Naive thymus-derived CD4-positive, alpha-beta T cell (primary cell): ENCODE measurements at regions of chr17 and their contacts with region 1.

Region 1: GRCh38 chr17:17041571-17042380 is 481 bp upstream of the MPRIP start:
- DNase-seq: peak; percentile 88 to 96 (median 95)
- ATAC-seq: peak; percentile 99
- H3K4me3 ChIP-seq: peak overlapping the region; percentile 73
- H3K4me3 Mint-ChIP-seq: peak overlapping the region; percentile 66 to 94 (median 76)
- H3K27ac ChIP-seq: peak overlapping the region; percentile 61
- H3K27ac Mint-ChIP-seq: peak overlapping the region in 2 of 9 donors; percentile 50 to 71
- H3K4me1 ChIP-seq: peaks cover 35% of the 10 kb centered on the region in 2 donors
- H3K4me1 Mint-ChIP-seq: peaks cover 37 to 47% (median 43%) of the 10 kb centered on the region in 7 donors
- H3K27me3 ChIP-seq: no peaks in the 10 kb centered on the region
- H3K27me3 Mint-ChIP-seq: peaks cover 0 to 4% (median 0%) of the 10 kb centered on the region in 5 donors

Region 2: DNA sequence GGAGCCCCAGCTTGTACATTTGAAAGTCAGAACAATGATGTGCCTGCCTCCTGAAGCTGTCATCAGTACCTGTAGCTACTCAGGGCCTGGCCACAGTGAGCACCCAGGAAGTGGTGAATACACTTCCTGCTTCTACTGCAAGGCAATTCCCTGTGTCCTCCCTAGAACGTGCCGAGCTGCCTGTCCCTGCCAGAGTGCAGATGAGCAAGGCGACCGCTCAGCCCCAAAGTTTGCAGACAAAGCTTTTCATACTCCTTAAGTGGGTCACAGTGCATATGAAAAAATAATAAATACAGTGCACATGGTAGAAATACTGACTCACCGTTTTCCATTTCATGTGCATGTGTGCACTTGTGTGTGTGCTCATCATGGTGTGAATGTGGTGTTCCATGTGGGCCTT is 77.8 kb after region 1 on chr17:
- CTCF ChIA-PET with region 1: no interaction called
- POLR2A ChIA-PET with region 1: no interaction called
- intact Hi-C with region 1: loop called in 1 of 2 experiments (anchors 10 kb)
- DNase-seq: peak in 8 of 9 donors; percentile 37 to 62 (median 53)
- ATAC-seq: peak; percentile 88
- H3K4me3 ChIP-seq: no peak overlapping the region
- H3K4me3 Mint-ChIP-seq: peak overlapping the region; percentile 49 to 72 (median 62)
- H3K27ac ChIP-seq: peak overlapping the region; percentile 44
- H3K27ac Mint-ChIP-seq: peak overlapping the region; percentile 81 to 92 (median 87)
- H3K4me1 ChIP-seq: peaks cover 43 to 52% of the 10 kb centered on the region in 2 donors
- H3K4me1 Mint-ChIP-seq: peaks cover 45 to 91% (median 89%) of the 10 kb centered on the region in 7 donors
- H3K27me3 ChIP-seq: no peaks in the 10 kb centered on the region
- H3K27me3 Mint-ChIP-seq: no peaks in the 10 kb centered on the region

Region 3: GRCh38 chr17:17206124-17206912 is 164.5 kb after region 1 on chr17 and contains the start of gene PLD6:
- CTCF ChIA-PET with region 1: no interaction called
- POLR2A ChIA-PET with region 1: no interaction called
- intact Hi-C with region 1: loop called in 1 of 2 experiments (anchors 1 kb)
- DNase-seq: peak; percentile 88 to 96 (median 93)
- ATAC-seq: peak; percentile 92
- H3K4me3 ChIP-seq: peak within 1 kb of the TSS; percentile 68
- H3K4me3 Mint-ChIP-seq: peak within 1 kb of the TSS; percentile 87 to 93 (median 89)
- H3K27ac ChIP-seq: peak within 1 kb of the TSS; percentile 70
- H3K27ac Mint-ChIP-seq: peak within 1 kb of the TSS; percentile 75 to 96 (median 91)
- H3K4me1 ChIP-seq: peaks cover 17 to 30% of the 10 kb centered on the region in 2 donors
- H3K4me1 Mint-ChIP-seq: peaks cover 12 to 32% (median 19%) of the 10 kb centered on the region in 7 donors
- H3K27me3 ChIP-seq: no peaks in the 10 kb centered on the region
- H3K27me3 Mint-ChIP-seq: no peaks in the 10 kb centered on the region
- total RNA-seq, gene PLD6: 6.2 to 13.9 (median 12.1) TPM

Region 4: DNA sequence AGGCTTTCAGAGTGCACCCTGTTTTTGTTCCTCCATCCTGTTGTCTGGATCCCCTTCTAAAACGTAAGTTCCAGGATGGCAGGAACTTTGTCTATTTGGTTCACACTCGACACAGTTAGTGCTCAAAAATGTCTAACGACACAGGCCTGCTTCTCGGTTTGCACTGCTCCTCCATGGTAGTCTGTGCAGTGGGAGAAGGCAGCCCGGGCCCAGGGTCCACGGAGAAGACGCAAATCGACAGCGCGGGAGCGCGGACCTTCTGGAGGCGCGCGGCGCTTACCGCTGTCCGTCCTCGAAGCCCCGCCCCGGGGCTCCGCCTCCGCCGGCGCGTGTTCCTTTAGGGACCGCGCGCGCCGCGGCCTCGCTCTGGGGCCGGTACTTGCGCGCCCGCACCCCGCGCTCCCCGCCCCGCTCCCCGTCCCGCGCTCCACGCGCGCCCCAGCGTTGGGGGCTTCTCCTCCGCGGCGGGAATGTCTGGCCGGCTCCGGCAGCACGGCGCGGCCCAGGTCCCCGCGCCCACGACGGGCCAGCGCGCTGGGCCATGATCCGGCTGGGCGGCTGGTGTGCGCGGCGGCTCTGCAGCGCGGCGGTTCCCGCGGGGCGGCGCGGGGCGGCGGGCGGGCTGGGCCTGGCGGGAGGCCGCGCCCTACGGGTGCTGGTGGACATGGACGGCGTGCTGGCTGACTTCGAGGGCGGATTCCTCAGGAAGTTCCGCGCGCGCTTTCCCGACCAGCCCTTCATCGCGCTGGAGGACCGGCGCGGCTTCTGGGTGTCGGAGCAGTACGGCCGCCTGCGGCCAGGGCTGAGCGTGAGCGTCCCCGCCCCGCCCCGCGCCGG is 261.5 kb after region 1 on chr17 and contains the start of gene NT5M:
- CTCF ChIA-PET with region 1: no interaction called
- POLR2A ChIA-PET with region 1: no interaction called
- intact Hi-C with region 1: loop called (anchors 2 kb)
- DNase-seq: peak; percentile 33 to 84 (median 56)
- ATAC-seq: peak; percentile 77
- H3K4me3 ChIP-seq: peak within 1 kb of the TSS; percentile 58
- H3K4me3 Mint-ChIP-seq: peak within 1 kb of the TSS; percentile 82 to 96 (median 90)
- H3K27ac ChIP-seq: peak within 1 kb of the TSS; percentile 67
- H3K27ac Mint-ChIP-seq: peak within 1 kb of the TSS; percentile 53 to 93 (median 84)
- H3K4me1 ChIP-seq: peaks cover 12 to 33% of the 10 kb centered on the region in 2 donors
- H3K4me1 Mint-ChIP-seq: peaks cover 16 to 49% (median 37%) of the 10 kb centered on the region in 7 donors
- H3K27me3 ChIP-seq: no peaks in the 10 kb centered on the region
- H3K27me3 Mint-ChIP-seq: no peaks in the 10 kb centered on the region
- total RNA-seq, gene NT5M: 2.9 to 6.3 (median 3.5) TPM

Region 5: GRCh38 chr17:17496189-17497064 is 454.7 kb after region 1 on chr17 and contains the start of gene RASD1:
- CTCF ChIA-PET with region 1: no interaction called
- POLR2A ChIA-PET with region 1: no interaction called
- intact Hi-C with region 1: loop called in 1 of 2 experiments (anchors 1 kb)
- DNase-seq: peak; percentile 61 to 89 (median 74)
- ATAC-seq: peak; percentile 90
- H3K4me3 ChIP-seq: peak within 1 kb of the TSS; percentile 61
- H3K4me3 Mint-ChIP-seq: peak within 1 kb of the TSS; percentile 77 to 91 (median 86)
- H3K27ac ChIP-seq: peak within 1 kb of the TSS; percentile 44
- H3K27ac Mint-ChIP-seq: peak within 1 kb of the TSS in 5 of 9 donors; percentile 29 to 86 (median 42)
- H3K4me1 ChIP-seq: peaks cover 3 to 11% of the 10 kb centered on the region in 2 donors
- H3K4me1 Mint-ChIP-seq: peaks cover 12 to 20% (median 14%) of the 10 kb centered on the region in 7 donors
- H3K27me3 ChIP-seq: no peaks in the 10 kb centered on the region
- H3K27me3 Mint-ChIP-seq: peaks cover 5 to 24% (median 6%) of the 10 kb centered on the region in 5 donors
- total RNA-seq, gene RASD1: 0.35 to 2.5 (median 1.0) TPM